PC-9 (cell line): ENCODE measurements at regions of chr11 and their contacts with region 1.

Region 1: DNA sequence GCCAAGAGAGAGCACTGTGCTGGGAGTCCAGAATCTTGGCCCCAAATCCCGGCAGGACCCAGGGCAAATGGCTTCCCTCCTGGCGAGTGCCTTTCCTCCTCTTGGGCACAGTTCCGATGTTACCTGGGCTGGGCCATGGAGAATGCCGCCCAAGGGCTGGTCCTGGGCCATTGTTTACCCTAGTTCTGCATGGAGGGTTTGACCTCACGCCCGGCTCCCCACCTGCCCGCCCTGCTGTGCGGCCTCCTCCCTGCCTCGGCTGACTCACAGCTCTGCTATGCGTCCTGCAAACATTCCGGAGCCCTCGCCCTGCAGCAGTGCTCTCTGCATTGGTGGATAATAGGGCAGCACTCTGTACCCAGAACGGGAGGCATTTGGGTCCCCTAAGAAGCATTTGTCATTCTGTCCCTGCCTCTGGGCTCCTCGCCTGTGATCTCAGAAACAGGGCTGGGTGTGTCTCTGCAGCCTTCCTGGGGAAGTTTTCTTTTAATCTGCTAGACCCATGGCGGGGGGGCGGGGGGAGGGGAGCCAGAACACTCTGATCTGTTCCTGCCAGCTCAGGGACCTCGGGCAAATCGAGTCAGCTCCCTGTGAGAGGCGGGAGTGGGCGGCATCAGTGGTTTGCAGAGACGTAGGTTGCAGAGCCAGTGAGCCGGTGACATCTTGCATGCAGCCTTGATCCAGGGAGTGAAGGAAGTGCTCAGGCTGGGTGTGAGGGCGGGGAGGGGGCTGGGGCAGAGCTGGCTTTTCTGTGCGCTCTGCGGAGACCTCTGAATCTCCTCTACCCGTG is 32.9 kb upstream of the SMIM38 start:
- DNase-seq: peak; percentile 99 to 100
- H3K4me3 ChIP-seq: peak overlapping the region; percentile 43; the same call in 1 of the 2 replicates
- H3K27ac ChIP-seq: peak overlapping the region; percentile 96
- H3K4me1 ChIP-seq: peaks cover 42% of the 10 kb centered on the region
- H3K27me3 ChIP-seq: no peaks in the 10 kb centered on the region
- CTCF ChIP-seq: no peak

Region 2: GRCh38 chr11:69101115-69101791 is 21.6 kb before region 1 on chr11:
- CTCF ChIA-PET with region 1: interaction called, 4 read pairs
- POLR2A ChIA-PET with region 1: interaction called, 6 read pairs
- intact Hi-C with region 1: loop called (anchors 1 kb)
- DNase-seq: peak; percentile 82 to 91
- H3K4me3 ChIP-seq: no peak overlapping the region
- H3K27ac ChIP-seq: no peak overlapping the region
- H3K4me1 ChIP-seq: peaks cover 26% of the 10 kb centered on the region
- H3K27me3 ChIP-seq: no peaks in the 10 kb centered on the region
- CTCF ChIP-seq: peak; percentile 99

Region 3: DNA sequence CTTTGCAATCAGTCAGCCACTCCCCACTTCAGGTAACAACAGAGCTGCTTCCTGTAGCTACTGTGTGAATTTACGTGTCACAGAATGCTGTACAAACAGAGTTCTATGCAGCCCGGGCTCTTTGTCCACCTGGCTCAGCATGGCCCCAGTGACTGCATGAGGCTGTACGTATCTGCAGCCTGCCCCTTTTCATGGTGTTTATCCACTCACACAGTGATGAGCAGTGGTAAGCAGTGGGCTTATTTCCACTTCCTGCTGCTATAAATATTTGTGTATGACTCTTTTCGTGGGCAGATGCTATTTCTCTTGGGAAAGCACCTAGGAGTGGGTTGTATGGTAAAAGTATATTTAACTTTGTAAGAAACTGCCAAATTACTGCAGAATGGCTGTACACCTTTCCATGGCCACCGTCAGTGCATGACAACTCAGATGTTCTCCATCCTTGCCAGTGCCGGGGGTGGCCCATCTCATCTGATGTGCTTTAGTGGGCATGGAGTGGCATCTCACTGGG is 214.4 kb after region 1 on chr11:
- CTCF ChIA-PET with region 1: no interaction called
- POLR2A ChIA-PET with region 1: no interaction called
- intact Hi-C with region 1: loop called (anchors 2 kb)
- DNase-seq: peak in 1 of 2 experiments; percentile 36
- H3K4me3 ChIP-seq: no peak overlapping the region
- H3K27ac ChIP-seq: peak overlapping the region; percentile 24
- H3K4me1 ChIP-seq: peaks cover 54% of the 10 kb centered on the region
- H3K27me3 ChIP-seq: no peaks in the 10 kb centered on the region
- CTCF ChIP-seq: no peak

Region 4: DNA sequence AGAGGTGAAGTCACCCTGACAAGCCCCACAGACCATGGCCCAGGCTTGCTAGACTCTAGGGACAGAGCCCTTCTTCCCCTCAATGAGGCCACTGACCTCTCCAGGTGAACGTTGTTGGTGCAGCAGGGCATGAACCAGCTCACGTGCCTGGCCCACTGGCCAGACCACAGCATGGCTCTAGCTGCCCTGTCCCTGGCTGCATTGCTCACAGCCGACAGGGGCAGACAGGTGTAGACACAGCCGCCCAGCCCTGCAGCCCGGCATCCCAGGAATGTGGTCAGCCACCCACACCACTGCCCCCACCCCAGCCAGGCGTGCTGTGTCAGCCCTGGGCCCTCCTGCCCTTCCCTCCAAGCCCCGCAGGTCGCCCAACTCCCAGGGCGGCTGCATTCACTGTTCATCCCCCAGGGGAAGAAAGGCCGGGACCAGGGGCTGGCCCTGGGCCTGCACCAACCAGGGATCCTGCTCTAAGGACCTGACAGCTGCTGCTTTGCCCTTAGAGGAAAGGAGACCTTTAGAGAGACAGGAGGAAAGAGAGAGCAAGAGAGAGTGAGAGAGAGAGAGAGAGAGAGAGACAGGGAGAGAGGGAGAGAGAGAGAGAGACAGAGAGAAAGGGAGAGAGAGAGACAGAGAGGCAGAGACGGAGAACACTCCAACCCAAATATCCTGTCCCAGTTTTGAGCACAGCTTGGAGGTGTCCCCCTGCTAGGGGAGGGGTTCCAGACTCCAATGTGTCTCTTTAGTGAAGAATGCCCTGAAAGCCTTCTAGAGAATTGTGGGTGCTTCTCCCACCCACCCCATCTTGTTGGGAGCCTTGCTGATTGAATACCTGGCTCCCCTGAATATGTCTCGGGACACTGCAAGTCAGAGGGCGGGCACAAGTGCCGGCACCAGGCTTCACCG is 314.4 kb after region 1 on chr11:
- CTCF ChIA-PET with region 1: no interaction called
- POLR2A ChIA-PET with region 1: no interaction called
- intact Hi-C with region 1: loop called (anchors 1 kb)
- DNase-seq: peak; percentile 97 to 100
- H3K4me3 ChIP-seq: no peak overlapping the region
- H3K27ac ChIP-seq: peak overlapping the region; percentile 75
- H3K4me1 ChIP-seq: peaks cover 64% of the 10 kb centered on the region
- H3K27me3 ChIP-seq: no peaks in the 10 kb centered on the region
- CTCF ChIP-seq: peak; percentile 70

Region 5: GRCh38 chr11:69497221-69497787 is 374.5 kb after region 1 on chr11:
- CTCF ChIA-PET with region 1: no interaction called
- POLR2A ChIA-PET with region 1: no interaction called
- intact Hi-C with region 1: loop called (anchors 5 kb)
- DNase-seq: peak; percentile 81 to 93
- H3K4me3 ChIP-seq: no peak overlapping the region
- H3K27ac ChIP-seq: no peak overlapping the region
- H3K4me1 ChIP-seq: peaks cover 14% of the 10 kb centered on the region
- H3K27me3 ChIP-seq: peaks cover 18% of the 10 kb centered on the region
- CTCF ChIP-seq: no peak